Activated T-helper 1 cell treated with anti-CD3 and anti-CD28 coated beads, Interleukin-12 subunit alpha, Interleukin-12 subunit beta, Interleukin-2, Interleukin-4 antibody, amounts not matched to agents 30 ng/mL and 10 ng/mL and 1 ng/mL, durations not matched to agents 14 hours and 24 hours and 36 hours (primary cell): ENCODE measurements at regions of chr20 and their contacts with region 1.

Region 1: GRCh38 chr20:44909872-44910689 is at the start of gene PABPC1L:
- DNase-seq: peak; percentile 72
- H3K4me3 Mint-ChIP-seq: peak within 1 kb of the TSS; percentile 87
- H3K27ac Mint-ChIP-seq: peak within 1 kb of the TSS; percentile 84
- H3K4me1 Mint-ChIP-seq: peaks cover 32% of the 10 kb centered on the region
- H3K27me3 Mint-ChIP-seq: no peaks in the 10 kb centered on the region
- total RNA-seq, gene PABPC1L: 101 and 106 TPM in 2 replicates

Region 2: GRCh38 chr20:44896583-44896982 is 13.5 kb before region 1 on chr20:
- intact Hi-C with region 1: loop called (anchors 1 kb)
- DNase-seq: no peak
- H3K4me3 Mint-ChIP-seq: peak overlapping the region; percentile 2
- H3K27ac Mint-ChIP-seq: peak overlapping the region; percentile 3
- H3K4me1 Mint-ChIP-seq: peaks cover 80% of the 10 kb centered on the region
- H3K27me3 Mint-ChIP-seq: no peaks in the 10 kb centered on the region